PC-3 (cell line): ENCODE measurements at regions of chr17 and their contacts with region 1.

Region 1: DNA sequence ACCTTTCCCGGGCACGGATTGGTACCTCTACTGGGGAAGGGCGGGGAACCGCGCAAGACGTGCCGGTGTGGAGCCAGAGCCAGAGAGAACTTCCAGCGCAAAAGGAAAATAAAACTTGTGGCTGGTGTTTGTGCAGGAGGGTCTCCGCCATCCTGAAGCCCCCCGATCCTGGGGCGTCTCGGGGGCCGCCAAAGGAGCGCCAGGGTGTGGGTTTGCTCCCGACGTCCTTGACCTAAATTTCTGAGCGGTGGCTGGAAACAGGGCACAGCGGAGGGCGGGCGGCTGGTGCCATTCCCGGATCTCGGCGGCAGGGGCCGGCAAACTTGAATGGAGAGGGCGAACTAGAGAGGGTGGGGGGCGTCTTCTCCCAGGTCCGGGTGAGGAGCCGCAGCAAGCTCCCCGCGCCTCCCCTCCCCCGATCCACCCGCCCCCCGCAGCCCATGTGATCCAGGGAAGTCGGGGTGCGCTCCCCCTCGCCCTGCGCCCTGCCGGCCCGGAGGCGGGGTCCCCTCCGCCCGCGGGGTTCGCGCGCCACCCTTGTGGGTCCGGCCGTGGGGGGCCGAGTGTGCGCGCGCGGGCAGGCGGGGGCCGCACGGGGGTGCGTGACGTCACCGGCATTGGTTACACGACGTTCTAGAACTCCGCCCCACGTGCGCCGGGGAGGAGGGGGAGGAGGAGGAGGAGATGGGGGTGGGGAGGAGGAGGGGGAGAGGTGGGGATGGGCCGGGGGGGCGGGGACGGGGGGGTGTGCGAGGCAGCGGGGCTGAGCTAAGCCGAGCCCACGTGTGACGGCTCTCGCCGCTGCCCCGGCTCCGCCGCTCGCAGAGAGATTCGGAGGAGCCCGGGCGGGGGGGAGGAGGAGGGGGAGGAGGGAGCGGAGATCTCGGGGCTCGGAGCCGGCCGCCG is at the start of gene MSI2:
- DNase-seq: peak; percentile 81
- ATAC-seq: peak; percentile 70
- H3K4me3 ChIP-seq: peak within 1 kb of the TSS; percentile 78
- H3K27ac ChIP-seq: 0 out of 2 replicates have a peak within 1 kb of the TSS, but pooled peaks have one; percentile 7
- H3K4me1 ChIP-seq: peaks cover 16% of the 10 kb centered on the region
- H3K27me3 ChIP-seq: no peaks in the 10 kb centered on the region
- CTCF ChIP-seq: no peak
- total RNA-seq, gene MSI2: 54.7 and 60.4 TPM in 2 replicates

Region 2: GRCh38 chr17:57211543-57211942 is 44.5 kb before region 1 on chr17:
- CTCF ChIA-PET with region 1: no interaction called
- POLR2A ChIA-PET with region 1: interaction called, 8 read pairs
- intact Hi-C with region 1: loop called (anchors 2 kb)
- DNase-seq: peak; percentile 90
- ATAC-seq: peak; percentile 76
- H3K4me3 ChIP-seq: peak overlapping the region; percentile 10; the same call in 1 of the 2 replicates
- H3K27ac ChIP-seq: peak overlapping the region; percentile 88
- H3K4me1 ChIP-seq: peaks cover 48% of the 10 kb centered on the region
- H3K27me3 ChIP-seq: no peaks in the 10 kb centered on the region
- CTCF ChIP-seq: peak; percentile 38; the same call in 1 of the 2 replicates

Region 3: GRCh38 chr17:57349541-57350247 is 93.7 kb after region 1 on chr17:
- CTCF ChIA-PET with region 1: no interaction called
- POLR2A ChIA-PET with region 1: no interaction called
- intact Hi-C with region 1: no loop called
- DNase-seq: no peak
- ATAC-seq: no peak
- H3K4me3 ChIP-seq: no peak overlapping the region
- H3K27ac ChIP-seq: no peak overlapping the region
- H3K4me1 ChIP-seq: no peaks in the 10 kb centered on the region
- H3K27me3 ChIP-seq: no peaks in the 10 kb centered on the region
- CTCF ChIP-seq: 0 out of 2 replicates have a peak, but pooled peaks have one; percentile 11

Region 4: DNA sequence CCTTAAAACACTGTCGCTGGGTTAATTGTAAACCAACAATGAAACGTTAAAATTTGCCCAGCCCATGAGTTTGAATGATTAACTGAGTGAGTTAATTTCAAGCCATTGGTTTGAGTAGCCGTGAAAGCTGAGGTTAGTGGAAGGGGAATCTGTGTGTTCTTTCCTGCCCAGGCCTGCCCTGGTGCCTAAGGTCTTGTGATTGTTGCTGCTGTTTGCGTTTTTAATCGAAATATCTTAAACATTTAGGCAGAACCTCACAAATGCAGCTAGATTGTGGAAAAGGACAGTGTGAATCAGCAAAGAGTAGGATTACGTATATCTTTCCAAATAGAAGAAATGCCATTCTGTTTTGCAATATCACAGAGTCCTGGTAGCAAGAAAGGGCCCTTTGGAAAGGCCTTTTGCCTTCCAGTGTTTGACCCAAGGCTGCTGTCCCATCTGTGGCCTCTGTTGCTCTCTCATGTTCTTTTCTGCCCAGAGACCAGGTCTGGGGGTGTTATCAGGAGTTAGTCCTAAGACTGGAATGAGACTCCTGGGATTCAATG is 114.1 kb after region 1 on chr17:
- CTCF ChIA-PET with region 1: interaction called, 10 read pairs
- POLR2A ChIA-PET with region 1: interaction called, 4 read pairs
- intact Hi-C with region 1: no loop called
- DNase-seq: peak; percentile 73
- ATAC-seq: peak; percentile 42
- H3K4me3 ChIP-seq: no peak overlapping the region
- H3K27ac ChIP-seq: peak overlapping the region; percentile 61
- H3K4me1 ChIP-seq: peaks cover 56% of the 10 kb centered on the region
- H3K27me3 ChIP-seq: no peaks in the 10 kb centered on the region
- CTCF ChIP-seq: no peak

Region 5: DNA sequence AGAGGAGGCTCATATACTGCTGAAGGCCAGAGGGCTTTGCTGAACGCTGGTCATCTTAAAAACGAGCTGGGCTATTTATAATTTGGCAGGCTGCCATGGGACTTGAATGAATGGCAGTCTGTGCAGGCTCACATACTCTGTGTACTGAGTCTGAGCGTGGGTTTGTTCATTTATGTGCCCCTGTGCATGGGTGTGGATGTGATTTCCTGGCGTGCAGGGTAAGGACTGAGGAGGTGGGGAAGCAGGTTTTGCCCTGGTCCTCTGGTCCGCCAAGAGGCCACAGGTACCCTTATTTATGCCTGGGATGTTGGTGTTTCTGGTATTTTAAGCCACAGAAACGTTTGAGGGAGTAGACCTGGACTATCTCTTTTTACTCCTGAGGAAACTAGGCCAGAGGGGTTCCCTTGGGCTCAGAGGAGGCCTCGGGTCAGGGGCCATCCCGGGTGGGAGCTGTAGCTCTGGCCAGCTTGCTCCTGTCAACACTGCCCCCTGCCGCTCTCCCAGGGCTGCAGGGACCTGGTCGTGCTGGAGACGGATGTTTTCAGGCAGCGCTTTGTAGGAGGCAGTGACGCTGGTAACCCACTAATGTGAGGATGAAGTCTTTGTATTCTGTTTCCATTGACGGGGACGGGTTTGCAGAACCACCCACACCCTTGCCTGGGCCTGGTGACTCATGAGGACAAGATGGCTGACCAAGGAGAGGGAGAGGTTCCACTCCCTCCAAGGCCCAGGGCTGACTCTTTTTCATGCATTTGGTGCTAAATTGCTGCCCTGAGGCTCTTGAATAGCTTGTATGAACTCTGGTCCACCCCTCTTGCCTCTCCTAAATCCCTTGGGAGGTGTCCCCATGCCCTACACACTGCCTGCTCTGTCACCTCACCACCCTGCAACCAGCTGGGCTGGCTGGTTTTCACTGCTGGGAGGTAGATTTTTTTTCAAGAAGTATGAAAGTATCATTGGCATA is 184.8 kb after region 1 on chr17:
- CTCF ChIA-PET with region 1: no interaction called
- POLR2A ChIA-PET with region 1: no interaction called
- intact Hi-C with region 1: loop called (anchors 5 kb)
- DNase-seq: peak; percentile 70
- ATAC-seq: peak; percentile 47
- H3K4me3 ChIP-seq: no peak overlapping the region
- H3K27ac ChIP-seq: peak overlapping the region; percentile 27
- H3K4me1 ChIP-seq: peaks cover 39% of the 10 kb centered on the region
- H3K27me3 ChIP-seq: no peaks in the 10 kb centered on the region
- CTCF ChIP-seq: peak; percentile 29; the same call in 1 of the 2 replicates

Region 6: DNA sequence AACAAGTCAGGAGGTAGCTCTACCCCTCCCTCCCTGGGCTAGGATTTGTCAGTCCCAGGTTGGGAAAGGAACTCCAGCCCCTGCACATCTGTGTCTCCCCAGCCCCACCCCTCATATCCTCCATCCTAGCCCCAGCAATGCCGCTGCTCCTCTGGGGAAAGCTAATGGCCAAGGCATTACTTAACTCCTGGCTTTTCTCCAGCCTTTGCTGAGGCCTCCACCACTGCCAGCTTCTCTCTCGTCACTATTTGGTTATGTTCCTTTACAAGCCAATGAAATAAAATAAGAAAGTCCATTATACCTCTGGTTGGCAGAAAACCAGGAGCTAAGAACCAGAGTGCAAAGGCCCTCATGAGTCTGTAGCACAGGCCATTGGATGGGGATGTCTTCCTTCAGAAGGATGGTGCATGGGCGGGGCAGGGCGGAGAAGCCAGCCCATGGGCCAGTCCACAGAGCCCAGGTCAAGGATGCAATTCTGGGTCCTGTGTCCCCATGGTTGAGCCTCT is 318.1 kb after region 1 on chr17:
- CTCF ChIA-PET with region 1: no interaction called
- POLR2A ChIA-PET with region 1: no interaction called
- intact Hi-C with region 1: loop called (anchors 5 kb)
- DNase-seq: peak; percentile 62
- ATAC-seq: peak; percentile 78
- H3K4me3 ChIP-seq: no peak overlapping the region
- H3K27ac ChIP-seq: peak overlapping the region; percentile 27
- H3K4me1 ChIP-seq: peaks cover 25% of the 10 kb centered on the region
- H3K27me3 ChIP-seq: no peaks in the 10 kb centered on the region
- CTCF ChIP-seq: no peak